Activated B cell treated with CpG ODN at 0.5 μM for 24 hours (primary cell): ENCODE measurements at regions of chr18 and their contacts with region 1.

Region 1: DNA sequence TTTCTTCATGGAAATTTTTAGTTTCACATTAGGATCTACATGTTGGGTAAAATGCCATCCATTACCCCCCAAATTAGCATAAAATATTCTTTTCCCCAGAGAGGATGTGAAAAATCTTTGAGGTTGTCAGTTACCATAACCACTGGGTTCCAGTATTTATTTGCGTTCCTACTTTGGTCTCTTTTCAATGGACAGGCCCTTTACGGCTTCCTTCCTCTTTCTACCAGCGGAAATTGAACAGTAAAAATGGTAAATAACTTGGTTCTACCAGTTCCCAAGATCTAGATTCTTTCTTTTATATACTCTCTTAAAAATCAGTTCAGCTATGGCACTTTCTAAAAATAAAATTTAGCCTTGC is 169.2 kb upstream of the APCDD1 start:
- DNase-seq: no peak
- ATAC-seq: peak; percentile 62
- H3K4me3 Mint-ChIP-seq: peak overlapping the region; percentile 61
- H3K27ac Mint-ChIP-seq: peak overlapping the region; percentile 6
- H3K4me1 Mint-ChIP-seq: peaks cover 51% of the 10 kb centered on the region
- H3K27me3 Mint-ChIP-seq: no peaks in the 10 kb centered on the region
- CTCF ChIP-seq: no peak

Region 2: DNA sequence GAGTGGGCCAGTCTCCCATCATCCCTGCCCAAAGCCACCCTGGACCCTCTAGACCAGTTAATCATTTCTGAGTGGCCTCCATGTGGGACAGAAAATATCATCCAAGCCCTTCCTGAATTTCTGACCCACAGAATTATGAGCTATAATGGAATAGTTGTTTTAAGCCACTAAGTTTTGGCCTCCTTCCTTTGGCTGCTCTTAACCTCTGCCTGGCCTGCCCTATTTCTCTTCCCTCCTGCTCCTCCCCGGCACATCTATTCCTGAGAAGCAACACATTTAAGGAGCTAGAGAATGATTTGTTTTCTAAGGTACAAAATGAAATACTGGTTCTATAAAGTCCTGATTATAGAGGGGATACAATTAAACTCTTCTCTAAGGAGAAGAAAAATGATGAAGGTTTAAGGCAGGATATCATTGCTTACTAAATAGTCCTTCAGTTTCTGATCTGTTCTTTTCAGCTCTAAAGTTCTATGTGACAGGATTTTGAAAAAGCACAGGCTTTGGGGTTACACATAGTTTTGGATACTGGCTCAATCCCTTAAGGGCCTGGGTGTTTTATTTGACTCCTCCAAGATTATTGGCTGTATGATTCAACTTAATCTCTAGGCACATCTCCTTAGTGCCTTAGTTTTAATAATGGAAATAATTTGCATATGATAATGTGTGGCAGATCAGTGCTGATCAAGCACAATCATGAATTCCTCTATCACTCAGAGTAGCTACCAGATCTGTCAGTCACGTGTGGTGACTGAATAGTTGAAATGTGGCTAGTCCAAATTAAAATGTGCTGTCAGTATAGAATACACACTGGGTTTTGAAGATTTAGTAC is 131.1 kb before region 1 on chr18:
- CTCF ChIA-PET with region 1: no interaction called
- POLR2A ChIA-PET with region 1: no interaction called
- intact Hi-C with region 1: no loop called
- DNase-seq: no peak
- ATAC-seq: no peak
- H3K4me3 Mint-ChIP-seq: no peak overlapping the region
- H3K27ac Mint-ChIP-seq: no peak overlapping the region
- H3K4me1 Mint-ChIP-seq: no peaks in the 10 kb centered on the region
- H3K27me3 Mint-ChIP-seq: no peaks in the 10 kb centered on the region
- CTCF ChIP-seq: no peak

Region 3: DNA sequence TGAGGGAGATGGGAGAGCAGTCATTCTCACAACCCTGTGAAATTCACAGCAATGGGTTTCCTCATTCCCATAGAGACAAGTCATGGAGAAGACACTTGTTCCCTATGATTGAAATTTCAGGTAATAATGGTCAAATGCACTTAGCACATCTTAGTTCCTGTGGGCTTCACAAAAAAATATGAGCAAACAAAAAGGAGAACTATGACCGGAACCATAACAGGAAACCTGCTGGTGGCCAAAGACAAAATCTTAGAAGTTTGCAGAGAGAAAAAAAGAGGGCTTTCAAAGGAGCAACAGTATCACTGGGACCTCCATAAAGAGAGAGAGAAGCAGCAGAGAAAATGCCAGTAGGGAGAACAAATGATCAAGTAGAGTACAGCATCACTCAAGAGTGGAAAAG is 30.3 kb after region 1 on chr18:
- CTCF ChIA-PET with region 1: no interaction called
- POLR2A ChIA-PET with region 1: no interaction called
- intact Hi-C with region 1: loop called (anchors 2 kb)
- DNase-seq: no peak
- ATAC-seq: no peak
- H3K4me3 Mint-ChIP-seq: peak overlapping the region; percentile 16
- H3K27ac Mint-ChIP-seq: no peak overlapping the region
- H3K4me1 Mint-ChIP-seq: peaks cover 42% of the 10 kb centered on the region
- H3K27me3 Mint-ChIP-seq: no peaks in the 10 kb centered on the region
- CTCF ChIP-seq: no peak